CD14-positive monocyte (primary cell): ENCODE measurements at regions of chr1 and their contacts with region 1.

Region 1: DNA sequence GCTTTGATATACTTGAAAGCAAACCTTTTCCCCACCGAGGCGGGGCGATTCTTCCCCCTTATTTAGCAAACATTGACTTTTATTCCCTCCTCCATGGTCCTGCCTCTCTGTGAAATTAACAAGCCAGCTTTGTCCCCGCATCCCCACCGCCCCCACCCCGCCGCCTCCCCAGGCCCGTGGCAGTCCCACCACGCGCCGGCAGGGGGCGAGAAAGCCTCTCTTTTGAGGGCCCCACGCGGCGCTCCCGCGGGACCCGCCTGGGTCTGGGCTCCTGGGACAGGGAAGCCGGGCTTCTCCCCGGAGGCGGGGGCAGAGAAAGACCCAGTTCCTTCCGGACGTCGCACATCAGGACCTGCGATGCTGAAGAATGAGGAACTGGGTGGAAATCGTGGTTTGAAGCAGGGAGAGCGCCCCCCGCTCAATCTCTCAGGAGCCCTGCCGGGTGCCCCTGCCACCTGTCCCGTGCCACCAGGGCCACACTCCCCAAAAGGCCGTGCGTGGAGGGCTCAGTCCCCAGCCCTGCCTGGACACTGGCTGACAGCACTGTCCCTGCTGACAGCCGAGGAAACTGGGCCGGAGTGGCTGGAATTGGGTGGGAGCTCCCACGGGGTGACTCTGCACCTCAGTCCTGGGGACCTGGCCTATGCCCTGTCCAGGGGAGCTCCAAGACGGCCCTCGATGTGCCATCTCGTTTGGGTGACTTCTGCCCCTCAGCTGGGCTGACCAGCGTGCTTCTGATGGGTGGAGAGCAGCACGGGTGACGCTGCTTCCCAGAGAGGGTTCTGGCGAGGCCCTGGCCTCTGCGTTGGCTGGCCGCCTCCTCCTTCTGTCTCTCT is 8.6 kb upstream of the ACTRT2 start:
- DNase-seq: peak in 1 of 3 donors; percentile 4
- H3K4me3 ChIP-seq: no peak overlapping the region
- H3K4me3 Mint-ChIP-seq: no peak overlapping the region
- H3K27ac ChIP-seq: no peak overlapping the region
- H3K27ac Mint-ChIP-seq: no peak overlapping the region
- H3K4me1 ChIP-seq: no peaks in the 10 kb centered on the region
- H3K4me1 Mint-ChIP-seq: no peaks in the 10 kb centered on the region
- H3K27me3 ChIP-seq: no peaks in the 10 kb centered on the region
- H3K27me3 Mint-ChIP-seq: peaks cover 3 to 17% (median 7%) of the 10 kb centered on the region in 3 donors
- CTCF ChIP-seq: peak; percentile 90

Region 2: GRCh38 chr1:2381741-2382620 is 630.7 kb before region 1 on chr1:
- intact Hi-C with region 1: no loop called
- DNase-seq: peak; percentile 64 to 71 (median 67)
- H3K4me3 ChIP-seq: no peak overlapping the region
- H3K4me3 Mint-ChIP-seq: no peak overlapping the region
- H3K27ac ChIP-seq: no peak overlapping the region
- H3K27ac Mint-ChIP-seq: no peak overlapping the region
- H3K4me1 ChIP-seq: peaks cover 4 to 6% of the 10 kb centered on the region in 2 donors
- H3K4me1 Mint-ChIP-seq: peaks cover 9% of the 10 kb centered on the region
- H3K27me3 ChIP-seq: no peaks in the 10 kb centered on the region
- H3K27me3 Mint-ChIP-seq: peaks cover 0 to 3% (median 0%) of the 10 kb centered on the region in 3 donors
- CTCF ChIP-seq: peak; percentile 85

Region 3: GRCh38 chr1:3319874-3320245 is 307.2 kb after region 1 on chr1:
- intact Hi-C with region 1: loop called in 1 of 2 experiments (anchors 5 kb)
- DNase-seq: peak; percentile 16 to 37 (median 24)
- H3K4me3 ChIP-seq: no peak overlapping the region
- H3K4me3 Mint-ChIP-seq: no peak overlapping the region
- H3K27ac ChIP-seq: no peak overlapping the region
- H3K27ac Mint-ChIP-seq: no peak overlapping the region
- H3K4me1 ChIP-seq: no peaks in the 10 kb centered on the region
- H3K4me1 Mint-ChIP-seq: peaks cover 5% of the 10 kb centered on the region
- H3K27me3 ChIP-seq: peaks cover 0 to 9% of the 10 kb centered on the region in 2 donors
- H3K27me3 Mint-ChIP-seq: peaks cover 10 to 20% (median 12%) of the 10 kb centered on the region in 3 donors
- CTCF ChIP-seq: peak; percentile 74

Region 4: DNA sequence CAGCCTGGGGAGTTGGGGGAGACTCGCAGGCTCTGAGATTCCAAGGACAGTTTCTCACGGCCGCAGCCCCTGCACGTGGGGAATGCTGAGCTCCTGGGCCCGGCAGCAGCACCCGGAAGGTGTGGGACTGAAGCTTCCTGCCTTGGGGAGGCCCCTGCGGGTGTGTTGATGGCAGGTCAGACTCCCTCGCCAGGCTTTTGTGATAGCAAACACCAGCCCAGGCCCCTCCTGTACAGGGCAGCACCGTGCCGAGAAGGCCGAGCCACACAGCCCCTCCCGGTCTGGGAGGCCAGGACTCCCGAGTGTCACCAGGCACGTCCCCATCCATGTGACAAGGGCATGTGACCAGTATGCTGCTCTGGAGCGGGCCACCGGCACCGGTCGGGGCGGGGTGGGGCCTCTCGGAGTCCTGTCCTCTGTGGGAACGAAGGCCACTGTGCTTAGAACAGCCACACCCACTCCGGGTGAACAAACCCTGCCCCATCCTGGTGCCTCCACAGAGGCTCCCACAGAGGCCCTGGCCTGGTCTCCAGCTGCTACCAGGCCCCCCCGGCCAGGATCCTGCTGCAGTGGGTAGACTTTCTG is 410.7 kb after region 1 on chr1:
- intact Hi-C with region 1: loop called (anchors 2 to 5 kb)
- DNase-seq: no peak
- H3K4me3 ChIP-seq: no peak overlapping the region
- H3K4me3 Mint-ChIP-seq: no peak overlapping the region
- H3K27ac ChIP-seq: no peak overlapping the region
- H3K27ac Mint-ChIP-seq: no peak overlapping the region
- H3K4me1 ChIP-seq: no peaks in the 10 kb centered on the region
- H3K4me1 Mint-ChIP-seq: no peaks in the 10 kb centered on the region
- H3K27me3 ChIP-seq: peaks cover 0 to 2% of the 10 kb centered on the region in 2 donors
- H3K27me3 Mint-ChIP-seq: peaks cover 9 to 16% (median 14%) of the 10 kb centered on the region in 3 donors
- CTCF ChIP-seq: no peak